ENCODE measurements at regions of chr1 and their contacts with region 1.

Region 1: GRCh38 chr1:212879947-212880690 is 22.0 kb downstream of the FLVCR1 start:
- DNase-seq: no peak
- H3K4me3 ChIP-seq: no peak overlapping the region
- H3K4me3 Mint-ChIP-seq: no peak overlapping the region
- H3K27ac Mint-ChIP-seq: no peak overlapping the region
- H3K4me1 ChIP-seq: no peaks in the 10 kb centered on the region
- H3K4me1 Mint-ChIP-seq: no peaks in the 10 kb centered on the region
- H3K27me3 ChIP-seq: no peaks in the 10 kb centered on the region
- H3K27me3 Mint-ChIP-seq: no peaks in the 10 kb centered on the region
- CTCF ChIP-seq: no peak

Region 2: GRCh38 chr1:212847549-212847948 is 32.6 kb before region 1 on chr1 and contains the start of gene SPATA45:
- CTCF ChIA-PET with region 1: interaction called, 10 read pairs
- POLR2A ChIA-PET with region 1: no interaction called
- intact Hi-C with region 1: no loop called
- DNase-seq: no peak
- H3K4me3 ChIP-seq: no peak within 1 kb of the TSS
- H3K4me3 Mint-ChIP-seq: no peak within 1 kb of the TSS
- H3K27ac Mint-ChIP-seq: no peak within 1 kb of the TSS
- H3K4me1 ChIP-seq: no peaks in the 10 kb centered on the region
- H3K4me1 Mint-ChIP-seq: no peaks in the 10 kb centered on the region
- H3K27me3 ChIP-seq: no peaks in the 10 kb centered on the region
- H3K27me3 Mint-ChIP-seq: no peaks in the 10 kb centered on the region
- CTCF ChIP-seq: no peak
- total RNA-seq, gene SPATA45: not detected in 2 replicates

Measured in Caco-2 (cell line).